Right ventricle myocardium superior (tissue), 1 donor: ENCODE measurements at regions of chr20 and their contacts with region 1.

Region 1: DNA sequence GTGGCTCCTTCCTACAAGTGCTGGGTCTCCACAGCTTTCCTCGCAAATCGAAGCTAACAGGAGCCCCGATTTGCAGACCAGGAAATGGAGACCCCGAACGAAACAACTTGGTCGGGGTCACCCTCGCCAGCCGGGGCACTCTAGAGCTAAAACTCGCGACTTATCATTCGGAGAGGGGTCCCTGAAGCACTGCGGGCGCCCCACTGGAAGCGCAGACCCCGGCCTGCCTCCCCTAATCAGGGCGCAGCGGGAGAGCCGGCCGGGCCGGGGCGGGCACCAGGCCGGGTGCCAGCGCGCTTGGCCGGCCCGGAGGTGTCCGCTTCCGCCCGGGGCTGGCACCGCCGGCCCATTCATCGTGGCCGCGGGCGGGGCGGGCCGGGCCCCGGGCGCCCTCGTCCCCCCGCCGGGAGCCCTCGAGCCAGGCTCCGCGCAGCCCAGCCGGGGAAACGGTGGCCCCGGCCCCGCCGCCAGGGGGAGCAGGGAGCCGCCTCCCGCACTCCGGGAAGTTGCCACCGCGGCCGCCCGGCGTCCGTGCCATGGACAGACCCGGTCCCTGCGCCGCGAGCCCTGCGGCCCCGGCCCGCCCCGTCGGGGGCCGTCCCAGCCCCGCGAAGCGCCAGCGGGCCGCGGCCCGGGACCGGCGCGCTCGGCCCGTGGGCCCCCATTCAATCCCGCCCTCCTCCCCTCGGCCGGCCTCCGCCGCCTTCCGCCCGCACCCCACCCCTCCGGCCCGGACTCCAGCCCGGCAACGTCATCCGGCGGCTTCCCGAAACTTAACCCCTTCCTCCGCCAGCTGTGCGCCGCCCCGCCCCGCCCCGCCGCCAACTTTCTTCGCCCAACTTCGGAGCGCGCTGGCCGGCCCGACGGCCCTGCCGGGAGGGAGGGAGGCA is 961 bp downstream of the RRBP1 start:
- DNase-seq: peak; percentile 89
- ATAC-seq: peak; percentile 47

Region 2: GRCh38 chr20:17617551-17618223 is 63.4 kb before region 1 on chr20:
- intact Hi-C with region 1: loop called (anchors 10 kb)
- DNase-seq: peak; percentile 75
- ATAC-seq: peak; percentile 62

Region 3: DNA sequence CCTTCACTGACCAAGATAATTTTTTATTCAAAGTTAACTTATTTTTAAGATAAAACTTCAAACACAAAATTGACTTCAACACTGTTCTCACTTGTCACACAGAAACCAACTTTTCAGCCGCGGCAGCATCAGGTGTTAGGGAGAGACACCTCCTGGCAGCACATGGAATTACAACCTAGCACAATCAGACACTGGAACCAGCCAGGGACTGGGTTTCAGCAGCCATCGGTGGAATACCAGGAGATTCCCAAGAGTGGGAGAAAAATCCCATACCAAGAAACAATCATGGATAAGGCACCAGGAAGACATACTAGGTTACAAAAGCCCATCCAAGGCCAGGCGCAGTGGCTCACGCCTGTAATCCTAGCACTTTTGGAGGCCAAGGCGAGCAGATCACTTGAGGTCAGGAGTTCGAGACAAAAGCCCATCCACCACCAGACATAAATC is 217.5 kb after region 1 on chr20:
- intact Hi-C with region 1: loop called (anchors 2 kb)
- DNase-seq: peak; percentile 70
- ATAC-seq: peak; percentile 80